OCI-LY7 (cell line): ENCODE measurements at regions of chr1 and their contacts with region 1.

Region 1: GRCh38 chr1:226062558-226063223 is at the start of gene H3-3A:
- DNase-seq: peak; percentile 96
- H3K4me3 ChIP-seq: peak within 1 kb of the TSS; percentile 89
- H3K27ac ChIP-seq: peak within 1 kb of the TSS; percentile 92
- H3K4me1 ChIP-seq: peaks cover 33% of the 10 kb centered on the region
- CTCF ChIP-seq: 0 out of 2 replicates have a peak, but pooled peaks have one; percentile 22
- total RNA-seq, gene H3-3A: 365 and 416 TPM in 2 replicates

Region 2: GRCh38 chr1:226083302-226084101 is 20.8 kb after region 1 on chr1:
- CTCF ChIA-PET with region 1: interaction called, 3 read pairs
- POLR2A ChIA-PET with region 1: interaction called, 10 read pairs
- intact Hi-C with region 1: loop called (anchors 2 kb)
- DNase-seq: peak; percentile 92
- H3K4me3 ChIP-seq: peak overlapping the region; percentile 70
- H3K27ac ChIP-seq: peak overlapping the region; percentile 49
- H3K4me1 ChIP-seq: peaks cover 33% of the 10 kb centered on the region
- CTCF ChIP-seq: no peak; the same call in 1 of the 2 replicates

Region 3: GRCh38 chr1:226109829-226110248 is 47.1 kb after region 1 on chr1:
- CTCF ChIA-PET with region 1: interaction called, 9 read pairs
- POLR2A ChIA-PET with region 1: interaction called, 8 read pairs
- intact Hi-C with region 1: loop called (anchors 1 kb)
- DNase-seq: peak; percentile 72
- H3K4me3 ChIP-seq: peak overlapping the region; percentile 73
- H3K27ac ChIP-seq: peak overlapping the region; percentile 80
- H3K4me1 ChIP-seq: peaks cover 41% of the 10 kb centered on the region
- CTCF ChIP-seq: no peak

Region 4: GRCh38 chr1:226287583-226287982 is 224.9 kb after region 1 on chr1:
- CTCF ChIA-PET with region 1: no interaction called
- POLR2A ChIA-PET with region 1: no interaction called
- intact Hi-C with region 1: no loop called
- DNase-seq: no peak
- H3K4me3 ChIP-seq: no peak overlapping the region
- H3K27ac ChIP-seq: no peak overlapping the region
- H3K4me1 ChIP-seq: no peaks in the 10 kb centered on the region
- CTCF ChIP-seq: no peak